WTC11 (cell line): ENCODE measurements at regions of chr22 and their contacts with region 1.

Region 1: GRCh38 chr22:24951942-24952836 is at the start of gene KIAA1671:
- DNase-seq: peak; percentile 98
- ATAC-seq: peak; percentile 75
- H3K4me3 Mint-ChIP-seq: peak within 1 kb of the TSS; percentile 98
- H3K27ac Mint-ChIP-seq: peak within 1 kb of the TSS; percentile 92
- H3K4me1 Mint-ChIP-seq: peaks cover 53% of the 10 kb centered on the region
- H3K27me3 Mint-ChIP-seq: peaks cover 10% of the 10 kb centered on the region
- CTCF ChIP-seq: peak; percentile 98
- total RNA-seq, gene KIAA1671: 22.0 to 26.0 TPM (median 24.0 TPM) in 3 replicates

Region 2: DNA sequence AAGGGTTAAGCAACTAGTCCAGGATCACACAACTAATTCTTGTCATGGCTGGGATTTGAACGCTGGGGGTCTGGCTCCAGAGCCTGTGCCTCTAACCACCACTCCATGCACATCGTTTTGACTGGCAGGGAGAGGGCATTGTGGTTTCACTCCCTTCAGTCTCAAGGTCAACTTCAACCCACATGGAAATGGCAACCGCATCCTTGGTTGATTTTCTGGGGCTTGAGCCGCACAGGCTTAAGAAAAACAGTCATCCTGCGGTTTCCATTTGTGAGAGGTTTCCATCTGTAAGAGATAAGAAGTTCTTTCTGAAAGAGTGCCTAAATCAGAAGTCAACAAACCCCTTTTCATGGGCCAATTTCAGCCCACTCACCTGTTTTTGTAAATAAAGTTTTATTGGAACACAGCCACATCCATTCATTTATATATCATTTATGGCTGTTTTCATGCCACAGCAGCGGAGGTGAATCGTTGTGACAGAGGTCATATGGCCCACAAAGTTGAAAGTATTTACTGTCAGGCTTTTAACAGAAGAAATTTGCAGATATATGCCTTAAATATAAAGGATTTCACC is 80.5 kb before region 1 on chr22:
- CTCF ChIA-PET with region 1: no interaction called
- POLR2A ChIA-PET with region 1: no interaction called
- DNase-seq: no peak
- ATAC-seq: no peak
- H3K4me3 Mint-ChIP-seq: no peak overlapping the region
- H3K27ac Mint-ChIP-seq: no peak overlapping the region
- H3K4me1 Mint-ChIP-seq: no peaks in the 10 kb centered on the region
- H3K27me3 Mint-ChIP-seq: no peaks in the 10 kb centered on the region; the same call in 1 of the 2 replicates
- CTCF ChIP-seq: no peak

Region 3: GRCh38 chr22:24977370-24978221 is 25.4 kb after region 1 on chr22:
- CTCF ChIA-PET with region 1: no interaction called
- POLR2A ChIA-PET with region 1: no interaction called
- DNase-seq: no peak
- ATAC-seq: peak; percentile 67
- H3K4me3 Mint-ChIP-seq: no peak overlapping the region
- H3K27ac Mint-ChIP-seq: peak overlapping the region; percentile 78
- H3K4me1 Mint-ChIP-seq: peaks cover 36% of the 10 kb centered on the region
- H3K27me3 Mint-ChIP-seq: no peaks in the 10 kb centered on the region
- CTCF ChIP-seq: no peak

Region 4: GRCh38 chr22:25027959-25028840 is 76.0 kb after region 1 on chr22:
- CTCF ChIA-PET with region 1: interaction called, 16 read pairs
- POLR2A ChIA-PET with region 1: interaction called, 3 read pairs
- DNase-seq: peak; percentile 79
- ATAC-seq: peak; percentile 84
- H3K4me3 Mint-ChIP-seq: no peak overlapping the region
- H3K27ac Mint-ChIP-seq: peak overlapping the region; percentile 29; the same call in 1 of the 2 replicates
- H3K4me1 Mint-ChIP-seq: peaks cover 18% of the 10 kb centered on the region
- H3K27me3 Mint-ChIP-seq: no peaks in the 10 kb centered on the region
- CTCF ChIP-seq: peak; percentile 24; the same call in 1 of the 2 replicates

Region 5: GRCh38 chr22:25048659-25049647 is 96.8 kb after region 1 on chr22:
- CTCF ChIA-PET with region 1: interaction called, 35 read pairs
- POLR2A ChIA-PET with region 1: no interaction called
- DNase-seq: peak; percentile 81
- ATAC-seq: peak; percentile 87
- H3K4me3 Mint-ChIP-seq: no peak overlapping the region
- H3K27ac Mint-ChIP-seq: no peak overlapping the region
- H3K4me1 Mint-ChIP-seq: peaks cover 4% of the 10 kb centered on the region
- H3K27me3 Mint-ChIP-seq: no peaks in the 10 kb centered on the region
- CTCF ChIP-seq: peak; percentile 95

Region 6: DNA sequence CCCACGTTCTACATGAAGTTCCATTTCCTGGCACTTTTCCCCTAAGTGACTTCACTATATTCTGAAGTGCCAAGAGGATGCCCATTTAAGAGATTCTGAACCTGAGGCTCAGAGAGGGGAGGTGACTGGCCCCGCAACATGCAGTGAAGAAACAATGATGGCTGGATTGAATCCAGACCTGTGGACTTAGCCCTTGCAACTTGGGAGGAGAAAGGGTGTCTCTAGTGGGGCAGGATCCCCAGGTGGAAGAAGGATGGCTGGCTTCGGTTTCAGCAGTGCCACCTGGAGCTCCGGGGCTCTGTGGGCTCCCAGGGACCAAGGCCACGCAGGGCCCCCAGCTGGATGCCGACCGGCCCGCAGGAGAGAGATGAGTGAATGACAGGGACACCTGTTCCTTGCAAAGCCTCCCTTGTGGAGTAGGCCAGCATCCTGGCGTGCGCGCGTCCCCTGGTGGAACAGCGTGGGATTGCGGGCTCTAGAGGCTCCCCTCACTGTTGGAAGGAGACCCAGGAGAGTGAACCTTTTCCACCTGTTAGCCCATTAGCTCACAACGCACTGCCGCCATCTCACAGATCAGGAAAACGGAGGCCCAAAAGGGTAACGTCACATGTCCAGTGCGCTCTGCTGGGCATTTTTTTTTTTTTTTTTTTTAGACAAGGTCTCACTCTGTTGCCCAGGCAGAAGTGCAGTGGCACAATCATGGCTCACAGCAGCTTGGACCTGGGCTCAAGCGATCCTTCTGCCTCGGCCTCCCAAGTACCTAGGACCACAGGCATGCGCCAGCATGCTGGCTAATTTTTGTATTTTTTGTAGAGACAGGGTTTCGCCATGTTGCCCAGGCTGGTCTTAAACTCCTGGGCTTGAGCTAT is 105.1 kb after region 1 on chr22:
- CTCF ChIA-PET with region 1: interaction called, 31 read pairs
- POLR2A ChIA-PET with region 1: interaction called, 3 read pairs
- DNase-seq: peak; percentile 95
- ATAC-seq: peak; percentile 96
- H3K4me3 Mint-ChIP-seq: no peak overlapping the region
- H3K27ac Mint-ChIP-seq: peak overlapping the region; percentile 81; the same call in 1 of the 2 replicates
- H3K4me1 Mint-ChIP-seq: peaks cover 22% of the 10 kb centered on the region
- H3K27me3 Mint-ChIP-seq: no peaks in the 10 kb centered on the region
- CTCF ChIP-seq: peak; percentile 83